Posterior cingulate gyrus (tissue), 11 donors: ENCODE measurements at regions of chr16 and their contacts with region 1.

Region 1: DNA sequence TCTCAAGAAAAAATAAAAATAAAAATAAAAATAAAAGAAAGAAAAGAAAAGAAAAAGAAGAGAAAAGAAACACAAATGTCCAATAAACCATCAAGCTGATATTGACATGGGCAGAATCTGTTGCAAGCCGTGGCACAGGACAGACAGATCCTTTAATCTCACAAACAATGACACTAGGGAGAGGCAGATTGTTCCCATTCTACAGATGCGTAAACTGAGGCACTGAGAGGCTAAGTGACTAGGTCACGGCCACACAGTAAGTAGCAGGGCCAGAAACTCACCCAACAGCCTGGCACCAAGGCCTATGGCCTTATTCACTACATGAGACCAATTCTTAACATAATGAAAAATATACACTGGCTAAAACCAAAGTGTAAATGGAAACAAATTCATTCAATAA is 28.3 kb upstream of the ZFP90 start:
- DNase-seq: no peak

Region 2: DNA sequence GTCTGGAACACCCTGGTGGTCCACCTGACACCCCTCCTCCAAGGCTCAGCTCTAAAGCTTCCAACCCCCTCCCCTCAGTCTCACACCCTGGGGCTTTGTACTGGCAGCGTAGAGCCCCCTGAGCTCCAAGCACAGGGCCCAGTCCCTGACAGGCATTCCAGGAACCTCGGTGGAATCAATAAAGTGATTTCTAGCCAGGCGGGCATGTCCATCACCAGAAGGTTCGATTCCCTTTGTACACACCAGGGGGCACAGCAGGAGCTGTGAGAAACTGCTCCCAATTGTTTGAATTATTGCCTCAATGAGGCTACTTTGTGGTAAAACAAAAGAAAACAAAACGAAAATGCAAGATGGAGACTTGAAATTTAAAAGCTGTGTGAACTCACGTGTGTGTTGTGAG is 114.3 kb before region 1 on chr16:
- intact Hi-C with region 1: loop called (anchors 1 kb)
- DNase-seq: peak in 2 of 10 donors; percentile 22 to 51

Region 3: GRCh38 chr16:68460067-68460466 is 50.7 kb before region 1 on chr16:
- intact Hi-C with region 1: no loop called
- DNase-seq: no peak

Region 4: DNA sequence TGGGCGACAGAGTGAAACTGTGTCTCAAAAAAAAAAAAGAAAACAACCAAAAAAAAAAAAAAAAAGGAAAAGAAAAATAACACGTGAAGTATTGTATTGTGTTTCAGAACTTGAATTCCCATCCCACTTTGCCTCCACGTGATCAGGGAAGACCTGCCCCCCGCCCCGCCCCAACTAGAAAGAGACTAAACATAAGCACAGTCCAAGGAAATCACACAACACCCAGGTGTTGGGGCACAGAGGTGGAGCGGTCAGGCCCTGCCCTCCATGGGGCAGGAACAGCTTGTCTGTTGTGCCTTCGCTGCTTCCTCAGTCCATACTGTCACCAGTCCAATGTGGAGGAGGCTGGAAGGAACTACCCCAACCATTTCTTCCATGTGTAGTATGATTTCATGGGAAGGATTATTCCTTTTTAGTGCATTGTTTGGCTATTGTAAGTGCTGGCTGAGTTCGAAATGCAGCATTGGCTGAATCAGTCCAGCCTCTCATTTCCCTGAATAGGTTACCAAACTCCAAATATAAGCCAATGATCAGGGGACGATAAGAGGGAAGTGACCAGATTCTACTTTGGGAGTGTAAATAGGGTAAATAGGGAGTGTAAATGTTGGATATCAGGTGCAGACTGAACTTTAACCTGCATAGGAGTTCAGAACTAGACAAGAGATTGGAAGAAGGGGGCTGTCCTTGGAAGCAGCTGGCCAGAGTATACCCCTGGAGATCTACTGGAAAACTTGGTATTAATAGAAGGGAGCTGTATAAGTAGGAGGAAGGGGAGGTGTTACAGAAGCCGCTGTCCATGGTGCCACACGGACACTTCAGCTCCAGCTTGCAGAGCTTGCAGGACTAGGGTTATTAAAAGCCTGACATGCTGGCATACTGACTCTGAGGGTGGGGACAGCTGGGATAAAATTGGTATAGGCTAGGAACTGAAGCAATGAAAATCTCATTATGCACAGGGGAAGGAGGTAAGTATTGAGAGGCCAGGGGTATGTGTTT is 383.2 kb after region 1 on chr16:
- intact Hi-C with region 1: no loop called
- DNase-seq: no peak